Dorsolateral prefrontal cortex (tissue), 120 donors: ENCODE measurements at regions of chr18 and their contacts with region 1.

Region 1: GRCh38 chr18:10560450-10561045 is 34.7 kb downstream of the NAPG start:
- DNase-seq: peak in 9 of 10 donors; percentile 45 to 90 (median 74)
- H3K4me3 ChIP-seq: peak overlapping the region in 46 of 59 donors; percentile 3 to 58 (median 35)
- H3K27ac ChIP-seq: peak overlapping the region in 21 of 59 donors; percentile 7 to 65 (median 35)
- H3K27me3 ChIP-seq: no peaks in the 10 kb centered on the region
- CTCF ChIP-seq: peak; percentile 66 to 91 (median 83)

Region 2: DNA sequence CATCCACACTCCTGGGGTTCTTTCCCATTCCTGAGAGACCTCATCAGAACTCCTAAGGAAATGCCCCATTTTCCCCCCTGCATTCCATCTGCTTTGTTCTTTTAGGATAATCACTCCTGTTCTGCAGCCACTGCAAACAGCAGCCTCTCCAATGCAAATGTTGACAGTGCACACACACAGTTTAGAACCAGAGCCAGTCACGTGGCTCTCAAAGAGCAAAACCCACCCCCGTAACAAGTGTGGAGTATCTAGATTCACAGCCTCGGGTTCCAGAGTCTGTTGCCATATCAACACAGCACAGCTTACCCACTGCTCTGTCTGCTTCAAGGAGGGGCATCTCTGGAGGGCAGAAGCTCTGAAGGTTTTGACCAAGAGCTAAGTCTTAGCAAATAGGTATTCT is 145.2 kb after region 1 on chr18:
- intact Hi-C with region 1: loop called in 1 of 2 experiments (anchors 10 kb)
- DNase-seq: peak in 3 of 10 donors; percentile 54 to 60 (median 54)
- H3K4me3 ChIP-seq: no peak overlapping the region
- H3K27ac ChIP-seq: peak overlapping the region in 4 of 59 donors; percentile 9 to 44 (median 24)
- H3K27me3 ChIP-seq: no peaks in the 10 kb centered on the region
- CTCF ChIP-seq: no peak

Region 3: GRCh38 chr18:10787293-10787901 is 226.8 kb after region 1 on chr18:
- intact Hi-C with region 1: loop called in 1 of 2 experiments (anchors 5 kb)
- DNase-seq: peak; percentile 8 to 85 (median 67)
- H3K4me3 ChIP-seq: no peak overlapping the region
- H3K27ac ChIP-seq: peak overlapping the region in 20 of 59 donors; percentile 1 to 95 (median 36)
- H3K27me3 ChIP-seq: peaks cover 0 to 5% (median 0%) of the 10 kb centered on the region in 45 donors
- CTCF ChIP-seq: peak; percentile 48 to 89 (median 72)

Region 4: DNA sequence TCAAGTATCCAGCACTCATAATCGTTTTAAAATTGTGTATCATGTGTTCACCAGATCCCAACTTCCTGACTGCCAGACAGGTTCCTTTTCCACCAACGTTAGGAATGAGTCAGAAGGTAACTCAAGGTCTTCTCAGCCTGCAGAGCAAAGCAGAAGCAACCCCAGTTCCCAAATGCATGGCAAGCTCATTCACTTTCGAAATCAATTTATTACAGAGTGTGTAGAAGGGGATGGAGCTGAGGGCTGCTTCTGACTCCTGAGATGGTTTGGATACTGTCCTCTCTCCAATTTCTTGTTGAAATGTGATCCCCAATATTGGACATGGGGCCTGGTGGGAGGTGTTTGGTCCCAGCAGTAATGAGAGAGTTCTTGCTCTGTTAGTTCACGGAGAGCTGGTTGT is 474.3 kb after region 1 on chr18:
- intact Hi-C with region 1: loop called in 1 of 2 experiments (anchors 10 kb)
- DNase-seq: no peak
- H3K4me3 ChIP-seq: no peak overlapping the region
- H3K27ac ChIP-seq: no peak overlapping the region
- H3K27me3 ChIP-seq: peaks cover 0 to 5% (median 0%) of the 10 kb centered on the region in 45 donors
- CTCF ChIP-seq: no peak

Region 5: DNA sequence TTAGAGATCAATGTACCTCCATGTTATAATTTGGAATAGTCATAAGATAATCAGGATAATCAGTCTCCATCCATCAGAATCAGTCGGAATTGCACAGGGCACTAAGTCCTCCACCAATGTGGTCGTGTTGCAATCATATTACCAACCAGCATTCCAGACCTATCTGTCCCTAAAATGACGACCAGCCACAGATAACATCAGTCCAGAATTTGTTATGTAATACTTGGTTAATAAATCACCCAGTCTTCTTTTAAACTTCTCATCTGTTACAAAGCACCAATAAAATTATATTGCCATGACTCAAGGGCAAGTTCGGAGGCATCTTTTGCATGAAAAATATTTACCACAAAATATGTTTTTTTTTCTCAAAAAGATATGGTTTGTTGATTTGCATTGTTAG is 559.4 kb after region 1 on chr18:
- intact Hi-C with region 1: no loop called
- DNase-seq: no peak
- H3K4me3 ChIP-seq: peak overlapping the region in 18 of 59 donors; percentile 1 to 46 (median 21)
- H3K27ac ChIP-seq: peak overlapping the region; percentile 7 to 97 (median 90)
- H3K27me3 ChIP-seq: peaks cover 0 to 3% (median 0%) of the 10 kb centered on the region in 45 donors
- CTCF ChIP-seq: no peak

Region 6: GRCh38 chr18:11149441-11150270 is 589.1 kb after region 1 on chr18 and contains the start of gene PIEZO2:
- intact Hi-C with region 1: loop called (anchors 2 to 5 kb)
- DNase-seq: peak in 9 of 10 donors; percentile 49 to 90 (median 76)
- H3K4me3 ChIP-seq: peak within 1 kb of the TSS; percentile 39 to 82 (median 64)
- H3K27ac ChIP-seq: peak within 1 kb of the TSS in 53 of 59 donors; percentile 31 to 94 (median 83)
- H3K27me3 ChIP-seq: peaks cover 0 to 79% (median 47%) of the 10 kb centered on the region in 45 donors
- CTCF ChIP-seq: peak in 26 of 56 donors; percentile 7 to 50 (median 25)
- total RNA-seq, gene PIEZO2: 3.3 to 115 (median 29.1) TPM

Region 7: GRCh38 chr18:11553098-11553940 is 992.8 kb after region 1 on chr18:
- intact Hi-C with region 1: loop called in 1 of 2 experiments (anchors 5 kb)
- DNase-seq: peak in 2 of 10 donors; percentile 6 to 31
- H3K4me3 ChIP-seq: no peak overlapping the region
- H3K27ac ChIP-seq: no peak overlapping the region
- H3K27me3 ChIP-seq: peaks cover 0 to 21% (median 0%) of the 10 kb centered on the region in 45 donors
- CTCF ChIP-seq: peak; percentile 44 to 95 (median 89)